Activated T-helper 2 cell treated with anti-CD3 and anti-CD28 coated beads, Interferon-gamma antibody, Interleukin-2, Interleukin-4, amounts not matched to agents 10 μg/mL and 5 μg/mL and 100 μg/mL, durations not matched to agents 14 hours and 24 hours and 36 hours (primary cell): ENCODE measurements at regions of chr12 and their contacts with region 1.

Region 1: GRCh38 chr12:15276088-15276698 is 46.1 kb upstream of the PTPRO start:
- DNase-seq: no peak
- H3K4me3 Mint-ChIP-seq: no peak overlapping the region
- H3K27ac Mint-ChIP-seq: no peak overlapping the region
- H3K4me1 Mint-ChIP-seq: peaks cover 6% of the 10 kb centered on the region
- H3K27me3 Mint-ChIP-seq: peaks cover 13% of the 10 kb centered on the region

Region 2: GRCh38 chr12:15393037-15393436 is 116.8 kb after region 1 on chr12:
- intact Hi-C with region 1: no loop called
- DNase-seq: no peak
- H3K4me3 Mint-ChIP-seq: no peak overlapping the region
- H3K27ac Mint-ChIP-seq: no peak overlapping the region
- H3K4me1 Mint-ChIP-seq: no peaks in the 10 kb centered on the region
- H3K27me3 Mint-ChIP-seq: peaks cover 2% of the 10 kb centered on the region

Region 3: DNA sequence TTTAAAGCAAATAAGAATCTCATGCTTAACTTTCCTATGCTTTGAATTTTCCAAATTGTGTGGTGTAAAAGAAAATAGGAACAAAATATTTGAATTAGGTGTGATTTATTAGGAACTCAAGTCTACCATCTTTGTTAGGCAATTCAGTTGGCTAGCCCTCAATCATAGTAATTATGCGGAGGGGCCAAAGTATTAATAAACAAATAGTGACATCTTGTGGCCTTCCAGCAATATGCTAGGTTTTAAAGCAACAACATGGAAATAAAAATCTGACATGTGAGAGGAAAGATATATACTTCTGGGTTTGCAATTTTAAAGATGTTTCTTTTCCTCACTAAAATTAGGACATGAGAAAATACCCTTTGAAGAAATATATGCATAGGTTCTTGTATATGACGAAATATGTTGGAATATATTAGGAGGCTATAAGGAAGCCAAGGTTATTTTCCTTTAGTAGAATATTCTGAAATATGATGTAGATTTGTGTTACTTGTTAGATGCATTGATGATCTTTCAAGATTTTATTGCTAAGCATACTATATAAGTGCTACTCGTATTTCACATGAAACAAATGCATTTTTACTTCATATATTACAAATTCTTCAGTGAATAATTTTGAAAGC is 246.5 kb after region 1 on chr12:
- intact Hi-C with region 1: loop called (anchors 1 kb)
- DNase-seq: no peak
- H3K4me3 Mint-ChIP-seq: no peak overlapping the region
- H3K27ac Mint-ChIP-seq: no peak overlapping the region
- H3K4me1 Mint-ChIP-seq: peaks cover 5% of the 10 kb centered on the region
- H3K27me3 Mint-ChIP-seq: peaks cover 44% of the 10 kb centered on the region